GM12878 (cell line): ENCODE measurements at regions of chr19 and their contacts with region 1.

Region 1: GRCh38 chr19:3140667-3141038 is 4.8 kb downstream of the GNA15 start:
- DNase-seq: no peak
- ATAC-seq: peak; percentile 50
- H3K4me3 ChIP-seq: no peak overlapping the region
- H3K27ac ChIP-seq: no peak overlapping the region
- H3K4me1 ChIP-seq: peaks cover 11% of the 10 kb centered on the region
- H3K27me3 ChIP-seq: no peaks in the 10 kb centered on the region
- CTCF ChIP-seq: no peak
- EP300 ChIP-seq: no peak
- POLR2A ChIP-seq: no peak
- RAD21 ChIP-seq: no peak

Region 2: GRCh38 chr19:2977001-2977685 is 163.5 kb before region 1 on chr19 and contains the start of gene TLE6:
- CTCF ChIA-PET with region 1: no interaction called
- POLR2A ChIA-PET with region 1: no interaction called
- RAD21 ChIA-PET with region 1: no interaction called
- SMC1A ChIA-PET with region 1: no interaction called
- in situ Hi-C with region 1: no loop called
- intact Hi-C with region 1: no loop called
- DNase-seq: peak; percentile 87
- ATAC-seq: peak; percentile 99
- H3K4me3 ChIP-seq: peak within 1 kb of the TSS; percentile 90
- H3K27ac ChIP-seq: peak within 1 kb of the TSS; percentile 58
- H3K4me1 ChIP-seq: peaks cover 11% of the 10 kb centered on the region
- H3K27me3 ChIP-seq: no peaks in the 10 kb centered on the region
- CTCF ChIP-seq: no peak
- EP300 ChIP-seq: no peak
- POLR2A ChIP-seq: peak; percentile 78
- RAD21 ChIP-seq: no peak
- polyA plus RNA-seq, gene TLE6: 2.7 to 3.4 TPM

Region 3: DNA sequence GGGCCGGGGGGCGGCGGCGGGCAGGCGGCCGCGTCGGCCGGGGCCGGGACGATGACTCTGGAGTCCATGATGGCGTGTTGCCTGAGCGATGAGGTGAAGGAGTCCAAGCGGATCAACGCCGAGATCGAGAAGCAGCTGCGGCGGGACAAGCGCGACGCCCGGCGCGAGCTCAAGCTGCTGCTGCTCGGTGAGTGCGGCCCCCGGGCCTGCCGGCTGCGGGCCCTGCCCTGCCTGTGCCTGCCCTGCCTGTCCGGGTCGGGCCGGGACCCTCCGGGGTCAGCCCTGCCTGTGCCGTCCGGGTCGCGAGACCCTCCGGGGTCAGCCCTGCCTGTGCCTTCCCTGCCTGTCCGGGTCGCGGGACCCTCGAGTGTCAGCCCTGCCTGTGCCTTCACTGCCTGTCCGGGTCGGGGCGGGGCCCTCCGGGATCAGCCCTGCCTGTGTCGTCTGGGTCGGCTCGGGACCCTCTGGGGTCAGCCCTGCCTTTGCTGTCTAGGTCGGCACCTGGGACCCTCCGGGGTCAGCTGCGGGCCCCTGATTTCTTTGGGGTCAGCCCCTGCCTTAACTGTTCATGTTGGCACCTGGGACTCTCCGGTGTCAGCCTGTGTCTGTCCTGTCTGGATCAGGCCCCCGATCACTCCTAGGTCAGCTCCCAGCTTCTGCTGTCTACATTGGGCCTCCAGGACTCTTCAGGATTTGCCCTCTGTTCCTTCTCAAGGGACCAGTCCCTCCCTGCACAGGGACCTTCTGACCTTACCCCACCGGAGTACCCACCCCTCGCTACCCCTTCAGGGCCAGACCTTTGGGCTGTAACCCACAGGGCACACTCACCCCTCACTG is 45.8 kb before region 1 on chr19:
- CTCF ChIA-PET with region 1: no interaction called
- POLR2A ChIA-PET with region 1: no interaction called
- RAD21 ChIA-PET with region 1: no interaction called
- SMC1A ChIA-PET with region 1: no interaction called
- in situ Hi-C with region 1: no loop called
- intact Hi-C with region 1: no loop called
- DNase-seq: no peak
- ATAC-seq: peak; percentile 52
- H3K4me3 ChIP-seq: peak overlapping the region; percentile 77
- H3K27ac ChIP-seq: no peak overlapping the region
- H3K4me1 ChIP-seq: peaks cover 17% of the 10 kb centered on the region
- H3K27me3 ChIP-seq: no peaks in the 10 kb centered on the region; a peak in 2 of 4 replicates
- CTCF ChIP-seq: no peak
- EP300 ChIP-seq: no peak
- POLR2A ChIP-seq: no peak
- RAD21 ChIP-seq: no peak

Region 4: GRCh38 chr19:3157096-3157845 is 16.6 kb after region 1 on chr19:
- CTCF ChIA-PET with region 1: interaction called, 7 read pairs
- POLR2A ChIA-PET with region 1: interaction called, 12 read pairs
- RAD21 ChIA-PET with region 1: interaction called, 4 read pairs
- SMC1A ChIA-PET with region 1: interaction called, 6 read pairs
- in situ Hi-C with region 1: no loop called
- intact Hi-C with region 1: no loop called
- DNase-seq: no peak
- ATAC-seq: no peak
- H3K4me3 ChIP-seq: no peak overlapping the region
- H3K27ac ChIP-seq: no peak overlapping the region
- H3K4me1 ChIP-seq: peaks cover 14% of the 10 kb centered on the region
- H3K27me3 ChIP-seq: no peaks in the 10 kb centered on the region
- CTCF ChIP-seq: no peak
- EP300 ChIP-seq: no peak
- POLR2A ChIP-seq: no peak
- RAD21 ChIP-seq: no peak